IMR-90 (cell line): ENCODE measurements at regions of chr17 and their contacts with region 1.

Region 1: GRCh38 chr17:31696184-31696602 is 162.9 kb downstream of the COPRS start:
- DNase-seq: peak; percentile 88
- ATAC-seq: peak; percentile 92
- H3K4me3 ChIP-seq: no peak overlapping the region
- H3K27ac ChIP-seq: peak overlapping the region; percentile 62
- H3K4me1 ChIP-seq: peaks cover 18% of the 10 kb centered on the region
- H3K27me3 ChIP-seq: no peaks in the 10 kb centered on the region
- CTCF ChIP-seq: no peak; the same call in 1 of the 2 replicates
- POLR2A ChIP-seq: no peak
- RAD21 ChIP-seq: peak; percentile 36

Region 2: DNA sequence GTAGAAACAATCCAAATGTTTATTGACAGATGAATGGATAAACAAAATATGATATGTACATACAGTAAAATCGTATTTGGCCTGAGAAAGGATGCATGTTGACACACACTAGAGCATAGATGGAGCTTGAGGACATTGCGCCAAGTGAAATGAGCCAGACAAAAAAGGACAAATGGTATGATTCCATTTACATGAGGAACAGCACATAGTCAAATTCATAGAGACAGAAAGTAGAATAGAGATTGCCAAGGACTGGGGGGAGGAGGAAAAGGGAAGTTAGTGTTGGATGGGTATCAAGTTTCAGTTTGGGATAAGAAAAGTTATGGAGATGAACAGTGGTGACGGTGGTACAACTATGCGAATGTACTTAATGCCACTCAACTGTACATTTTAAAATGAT is 114.9 kb after region 1 on chr17:
- CTCF ChIA-PET with region 1: no interaction called
- POLR2A ChIA-PET with region 1: no interaction called
- dilution Hi-C with region 1: no loop called
- in situ Hi-C with region 1: no loop called
- intact Hi-C with region 1: loop called (anchors 10 kb)
- DNase-seq: peak; percentile 41
- ATAC-seq: no peak
- H3K4me3 ChIP-seq: no peak overlapping the region
- H3K27ac ChIP-seq: no peak overlapping the region
- H3K4me1 ChIP-seq: no peaks in the 10 kb centered on the region; the same call in 1 of the 2 replicates
- H3K27me3 ChIP-seq: no peaks in the 10 kb centered on the region
- CTCF ChIP-seq: no peak
- POLR2A ChIP-seq: no peak
- RAD21 ChIP-seq: no peak